AG04449 (cell line): ENCODE measurements at regions of chr4 and their contacts with region 1.

Region 1: DNA sequence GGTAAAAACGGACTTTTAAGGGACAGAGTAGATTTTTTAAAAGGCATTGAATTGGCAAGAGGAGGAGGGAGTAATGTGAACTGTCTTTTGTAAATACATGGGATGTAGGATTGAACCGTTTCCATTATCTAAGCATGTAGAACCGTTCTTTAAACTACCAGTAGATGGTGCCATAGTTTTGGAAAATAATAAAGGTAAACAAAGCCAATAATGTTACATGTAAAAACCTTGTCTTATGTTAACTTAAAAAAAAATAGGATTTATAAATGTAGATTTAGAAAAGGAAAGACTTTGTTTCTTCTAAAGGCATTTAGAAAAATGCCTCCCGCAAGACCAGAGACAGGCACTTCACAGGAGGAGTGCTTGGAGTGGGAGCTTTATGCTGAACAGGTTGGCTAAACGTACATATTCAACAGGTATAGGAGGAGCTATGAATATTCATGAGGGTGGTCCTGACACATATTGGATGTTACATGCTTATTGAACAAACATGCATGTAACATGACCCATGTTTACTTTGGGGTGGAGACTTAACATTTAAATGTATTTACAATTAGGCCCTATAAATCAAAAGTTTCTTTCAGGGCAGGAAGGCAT is 45.5 kb upstream of the FAM241A start:
- DNase-seq: no peak
- H3K4me3 ChIP-seq: no peak overlapping the region
- CTCF ChIP-seq: peak; percentile 40

Region 2: DNA sequence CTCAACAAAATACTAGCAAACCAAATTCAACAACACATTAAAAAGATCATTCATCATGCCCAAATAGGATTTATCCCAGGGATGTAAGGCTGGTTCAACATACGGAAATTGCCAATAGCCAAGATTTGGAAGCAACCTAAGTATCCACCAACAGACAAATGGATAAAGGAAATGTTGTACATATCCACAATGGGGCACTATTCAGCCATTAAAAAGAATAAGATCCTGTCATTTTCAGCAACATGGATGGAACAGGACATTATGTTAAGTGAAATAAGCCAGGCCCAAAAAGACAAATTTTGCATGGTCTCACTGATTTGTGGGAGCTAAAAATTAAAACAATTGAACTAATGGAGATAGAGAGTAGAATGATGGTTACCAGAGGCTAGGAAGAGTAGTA is 36.5 kb before region 1 on chr4:
- CTCF ChIA-PET with region 1: no interaction called
- POLR2A ChIA-PET with region 1: no interaction called
- DNase-seq: no peak
- H3K4me3 ChIP-seq: no peak overlapping the region
- CTCF ChIP-seq: no peak

Region 3: DNA sequence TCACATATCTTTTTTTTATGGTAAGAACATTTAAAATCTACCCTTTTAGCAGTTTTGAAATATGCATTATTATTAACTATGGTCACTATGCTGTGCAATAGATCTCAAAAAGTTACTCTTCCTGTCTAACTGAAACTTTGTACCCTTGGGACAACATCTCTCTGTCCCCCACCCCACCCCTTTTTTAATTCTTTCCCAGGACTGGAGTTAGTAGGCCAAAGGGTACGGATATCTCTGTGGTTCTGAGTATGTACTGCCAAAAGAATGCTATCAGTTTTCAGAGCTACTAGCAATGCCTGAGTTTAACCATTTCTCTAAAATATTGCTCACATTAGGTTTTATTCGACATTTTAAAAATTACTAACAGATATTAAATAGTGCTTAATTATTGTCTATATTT is 40.7 kb after region 1 on chr4:
- CTCF ChIA-PET with region 1: interaction called, 10 read pairs
- POLR2A ChIA-PET with region 1: no interaction called
- DNase-seq: no peak
- H3K4me3 ChIP-seq: no peak overlapping the region
- CTCF ChIP-seq: no peak

Region 4: GRCh38 chr4:112245383-112245782 is 145.6 kb after region 1 on chr4:
- CTCF ChIA-PET with region 1: interaction called, 373 read pairs
- POLR2A ChIA-PET with region 1: no interaction called
- DNase-seq: no peak
- H3K4me3 ChIP-seq: no peak overlapping the region
- CTCF ChIP-seq: no peak

Region 5: GRCh38 chr4:112257098-112257497 is 157.3 kb after region 1 on chr4:
- CTCF ChIA-PET with region 1: interaction called, 11 read pairs
- POLR2A ChIA-PET with region 1: no interaction called
- DNase-seq: no peak
- H3K4me3 ChIP-seq: no peak overlapping the region
- CTCF ChIP-seq: no peak

Region 6: DNA sequence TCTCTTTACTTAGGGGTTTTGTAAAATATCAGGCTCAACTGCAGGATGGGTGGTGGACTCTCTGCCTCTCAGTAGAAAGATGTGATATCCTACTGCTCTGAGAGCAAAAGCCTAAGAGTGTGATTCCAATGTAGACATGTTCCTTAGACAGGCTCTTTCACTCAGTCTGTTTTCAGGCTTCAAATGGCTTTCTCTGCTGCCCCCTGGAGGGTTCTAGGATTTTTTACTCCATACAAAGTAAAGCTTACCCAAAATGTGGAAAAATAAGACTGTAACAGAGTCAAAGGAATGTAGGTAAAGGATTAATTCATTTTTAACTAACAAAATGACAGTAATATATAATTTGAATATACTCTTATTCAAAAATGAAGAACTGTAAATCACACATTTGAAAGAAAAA is 504.8 kb after region 1 on chr4:
- CTCF ChIA-PET with region 1: interaction called, 14 read pairs
- POLR2A ChIA-PET with region 1: no interaction called
- DNase-seq: peak; percentile 12
- H3K4me3 ChIP-seq: no peak overlapping the region
- CTCF ChIP-seq: peak; percentile 51